ENCODE measurements at regions of chr15 and their contacts with region 1.

Region 1: GRCh38 chr15:64688770-64689169 is 86.6 kb downstream of the RBPMS2 start:
- DNase-seq: no peak
- H3K4me3 ChIP-seq: no peak overlapping the region
- H3K27ac ChIP-seq: no peak overlapping the region
- H3K4me1 ChIP-seq: no peaks in the 10 kb centered on the region
- H3K27me3 ChIP-seq: no peaks in the 10 kb centered on the region
- CTCF ChIP-seq: no peak

Region 2: GRCh38 chr15:64702816-64703646 is 14.3 kb after region 1 on chr15:
- CTCF ChIA-PET with region 1: interaction called, 4 read pairs
- POLR2A ChIA-PET with region 1: interaction called, 12 read pairs
- intact Hi-C with region 1: no loop called
- DNase-seq: peak; percentile 95
- H3K4me3 ChIP-seq: peak overlapping the region; percentile 71
- H3K27ac ChIP-seq: peak overlapping the region; percentile 76
- H3K4me1 ChIP-seq: peaks cover 37% of the 10 kb centered on the region
- H3K27me3 ChIP-seq: no peaks in the 10 kb centered on the region
- CTCF ChIP-seq: 0 out of 2 replicates have a peak, but pooled peaks have one; percentile 8

Measured in A673 (cell line).